ENCODE measurements at regions of chr9 and their contacts with region 1.

Region 1: GRCh38 chr9:128455849-128456612 is at the start of gene ODF2:
- DNase-seq: peak; percentile 87 to 98
- H3K4me3 ChIP-seq: peak within 1 kb of the TSS; percentile 71 to 90
- H3K27ac ChIP-seq: peak within 1 kb of the TSS; percentile 87 to 89
- H3K4me1 ChIP-seq: peaks cover 0 to 8% of the 10 kb centered on the region in 2 donors
- H3K27me3 ChIP-seq: no peaks in the 10 kb centered on the region
- CTCF ChIP-seq: no peak
- total RNA-seq, gene ODF2: 26.9 TPM

Region 2: DNA sequence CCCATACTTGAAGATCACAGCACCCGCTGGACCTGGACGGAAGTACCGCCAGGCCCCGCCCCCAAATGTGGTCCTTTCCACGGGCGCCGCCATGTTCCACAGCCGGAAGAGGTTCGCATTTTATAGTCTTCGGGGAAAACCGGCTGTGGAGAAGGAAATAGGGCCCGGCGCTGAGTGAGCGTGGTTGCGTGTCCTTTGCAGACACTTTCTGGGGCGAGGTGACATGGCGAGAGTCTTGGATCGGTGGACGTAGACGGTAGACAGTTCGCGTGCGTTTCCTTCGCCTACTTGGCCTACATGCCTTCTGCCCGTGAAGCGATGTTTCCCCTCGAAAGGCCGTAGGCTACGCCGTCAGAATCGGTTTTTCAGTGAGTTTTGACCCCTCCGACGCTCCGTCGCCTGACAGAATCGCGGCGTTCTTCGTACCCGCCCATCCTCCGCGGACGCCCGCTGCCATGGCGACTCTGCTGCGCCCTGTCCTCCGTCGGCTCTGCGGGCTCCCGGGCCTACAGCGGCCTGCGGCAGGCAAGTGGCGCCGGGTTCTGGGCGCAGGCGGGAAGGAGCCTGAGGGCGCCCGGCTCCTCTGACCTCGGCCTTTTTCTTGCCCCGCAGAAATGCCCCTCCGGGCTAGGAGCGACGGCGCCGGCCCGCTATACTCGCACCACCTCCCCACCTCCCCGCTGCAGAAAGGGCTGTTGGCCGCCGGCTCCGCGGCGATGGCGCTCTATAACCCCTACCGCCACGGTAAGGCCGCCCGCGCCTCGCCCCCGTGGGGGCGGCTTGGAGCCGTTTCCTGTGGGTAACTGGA is 133.4 kb before region 1 on chr9 and contains the starts of genes COQ4 and TRUB2:
- intact Hi-C with region 1: loop called (anchors 5 kb)
- DNase-seq: peak; percentile 72 to 97
- H3K4me3 ChIP-seq: peak within 1 kb of the TSS; percentile 72 to 76
- H3K27ac ChIP-seq: peak within 1 kb of the TSS; percentile 82 to 85
- H3K4me1 ChIP-seq: peaks cover 11 to 17% of the 10 kb centered on the region in 2 donors
- H3K27me3 ChIP-seq: no peaks in the 10 kb centered on the region
- CTCF ChIP-seq: no peak
- total RNA-seq, gene COQ4: 11.4 TPM
- total RNA-seq, gene TRUB2: 10.2 TPM

Region 3: DNA sequence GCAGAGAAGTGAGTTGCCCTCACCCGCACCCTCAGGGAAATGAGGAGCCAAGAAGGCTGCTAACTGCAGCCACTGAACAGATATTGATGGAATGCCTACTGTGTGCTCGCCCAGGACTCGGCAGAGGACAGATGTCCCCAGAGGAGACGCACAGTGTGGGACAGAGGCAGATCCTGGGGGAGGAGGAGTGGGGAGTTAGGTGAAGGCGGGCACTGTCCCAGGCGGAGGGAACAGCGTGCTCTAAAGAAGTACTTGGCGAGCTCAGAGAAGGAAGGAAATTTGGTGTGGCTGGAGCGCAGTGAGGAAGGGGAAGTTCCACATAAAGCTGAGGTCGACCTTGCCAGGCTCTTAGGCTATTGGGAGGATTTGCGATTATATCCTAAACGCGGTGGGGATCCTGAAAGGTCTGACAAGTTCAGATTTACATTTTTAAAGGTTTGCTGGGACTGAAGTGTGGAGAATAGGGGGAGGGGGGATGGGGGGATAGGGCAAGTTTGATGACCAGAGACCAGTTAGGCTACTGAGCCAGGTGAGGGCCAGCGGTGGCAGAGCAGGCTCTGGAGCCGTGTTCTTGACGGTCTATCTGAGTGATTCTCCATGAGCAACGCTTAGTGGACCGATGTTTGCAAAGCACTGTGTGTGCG is 58.9 kb before region 1 on chr9:
- intact Hi-C with region 1: no loop called
- DNase-seq: no peak
- H3K4me3 ChIP-seq: peak overlapping the region in 1 of 2 donors; percentile 22
- H3K27ac ChIP-seq: no peak overlapping the region
- H3K4me1 ChIP-seq: no peaks in the 10 kb centered on the region
- H3K27me3 ChIP-seq: no peaks in the 10 kb centered on the region
- CTCF ChIP-seq: no peak

Region 4: DNA sequence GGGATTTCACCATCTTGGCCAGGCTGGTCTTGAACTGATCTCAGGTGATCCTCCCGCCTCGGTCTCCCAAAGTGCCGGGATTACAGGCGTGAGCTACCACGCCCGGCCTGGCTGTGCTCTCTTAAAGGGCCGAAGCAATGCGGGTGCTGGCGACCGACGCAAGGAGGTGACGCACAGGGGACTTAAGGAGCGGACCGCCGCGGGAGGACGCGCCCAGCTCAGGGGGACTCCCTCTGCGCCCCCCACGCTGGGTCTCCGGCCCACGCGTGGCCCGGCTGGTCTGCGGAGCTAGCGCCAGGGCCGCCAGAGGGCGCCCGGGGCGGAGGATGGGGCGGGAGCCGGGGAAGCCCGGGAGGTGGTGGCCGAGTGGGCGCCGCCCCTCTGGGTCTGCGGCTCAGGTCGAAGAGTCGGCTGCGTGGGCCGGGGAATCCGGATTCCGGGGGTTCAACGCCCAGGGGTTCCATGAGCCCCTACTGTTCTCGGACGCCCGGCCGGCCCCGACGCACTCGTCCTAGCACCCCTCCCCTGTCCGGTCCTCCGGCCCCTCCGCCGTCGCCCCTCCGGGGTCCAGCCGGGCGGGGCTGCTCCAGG is 35.9 kb before region 1 on chr9:
- intact Hi-C with region 1: loop called (anchors 1 kb)
- DNase-seq: peak in 1 of 2 donors; percentile 85
- H3K4me3 ChIP-seq: peak overlapping the region; percentile 89 to 93
- H3K27ac ChIP-seq: peak overlapping the region; percentile 82
- H3K4me1 ChIP-seq: peaks cover 0 to 17% of the 10 kb centered on the region in 2 donors
- H3K27me3 ChIP-seq: no peaks in the 10 kb centered on the region
- CTCF ChIP-seq: peak; percentile 81 to 90 (median 84)

Region 5: DNA sequence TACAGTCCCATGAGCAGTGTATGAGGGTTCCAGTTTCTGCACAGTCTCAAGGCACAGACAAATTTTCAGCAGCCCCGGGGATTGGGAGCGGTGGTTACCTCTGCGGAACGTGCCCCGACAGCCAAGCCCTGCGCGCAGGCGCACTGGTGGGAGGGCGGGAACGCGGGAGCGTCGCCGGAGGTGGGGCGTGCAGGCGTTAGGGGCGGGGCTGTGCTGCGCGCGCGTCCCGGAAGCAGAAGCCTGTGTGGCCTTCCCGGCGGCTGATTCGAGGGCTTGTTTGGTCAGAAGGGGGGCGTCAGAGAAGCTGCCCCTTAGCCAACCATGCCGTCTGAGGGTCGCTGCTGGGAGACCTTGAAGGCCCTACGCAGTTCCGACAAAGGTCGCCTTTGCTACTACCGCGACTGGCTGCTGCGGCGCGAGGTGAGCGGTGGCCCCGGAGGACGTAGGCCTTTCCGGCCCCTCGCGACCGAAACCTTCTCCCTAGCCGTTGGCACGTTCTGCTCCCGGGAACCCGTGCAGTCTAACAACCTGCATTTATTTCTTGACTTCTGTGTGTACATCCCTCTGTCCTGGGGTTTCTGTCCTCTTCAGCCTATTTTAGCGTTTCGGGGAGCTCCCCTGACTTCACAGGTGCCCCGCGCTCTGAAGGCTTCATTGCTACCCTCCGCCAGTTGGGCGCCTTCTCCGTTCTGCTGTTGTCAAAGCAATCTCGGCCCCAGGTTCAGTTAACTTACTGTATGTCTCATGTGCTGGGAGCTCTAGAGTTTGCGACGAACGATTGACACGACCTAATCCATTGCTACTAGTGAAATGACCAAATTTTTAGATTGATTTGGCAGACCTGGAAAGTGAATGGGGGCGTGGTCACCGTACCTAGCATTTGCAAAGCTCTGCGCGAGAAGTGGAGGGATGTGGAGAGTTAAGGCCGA is 48.7 kb after region 1 on chr9 and contains the start of gene GLE1:
- intact Hi-C with region 1: loop called (anchors 1 kb)
- DNase-seq: peak; percentile 62 to 97
- H3K4me3 ChIP-seq: peak within 1 kb of the TSS; percentile 82 to 90
- H3K27ac ChIP-seq: peak within 1 kb of the TSS; percentile 66 to 82
- H3K4me1 ChIP-seq: peaks cover 3 to 23% of the 10 kb centered on the region in 2 donors
- H3K27me3 ChIP-seq: no peaks in the 10 kb centered on the region
- CTCF ChIP-seq: no peak
- total RNA-seq, gene GLE1: 6.3 TPM

Measured in ascending aorta (tissue), 2 donors.